ENCODE measurements at regions of chr10 and their contacts with region 1.

Region 1: DNA sequence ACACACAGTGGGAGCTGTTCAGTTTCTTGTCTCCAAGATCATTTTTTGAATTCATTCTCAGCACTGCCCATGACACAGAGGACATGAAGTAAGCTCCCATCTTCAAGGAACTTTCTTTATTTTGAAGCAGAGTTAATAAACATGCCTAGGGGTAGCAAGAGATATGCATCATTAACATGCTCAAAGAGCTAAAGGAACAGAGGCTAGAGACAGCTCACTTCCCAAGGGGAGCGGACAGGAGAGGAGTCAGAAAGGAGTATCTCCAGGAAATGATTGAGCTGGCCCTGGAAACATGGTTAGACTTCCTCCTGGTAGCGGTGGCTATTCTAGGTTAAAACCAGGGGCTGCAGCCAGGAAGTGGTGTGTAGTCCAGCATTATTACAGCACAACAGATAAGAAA is 135.9 kb downstream of the GPAM start:
- DNase-seq: peak; percentile 65
- H3K4me3 ChIP-seq: no peak overlapping the region
- H3K27ac ChIP-seq: no peak overlapping the region
- H3K4me1 ChIP-seq: peaks cover 6% of the 10 kb centered on the region
- H3K27me3 ChIP-seq: no peaks in the 10 kb centered on the region
- CTCF ChIP-seq: no peak

Region 2: GRCh38 chr10:111756217-111757061 is 291.2 kb before region 1 on chr10:
- CTCF ChIA-PET with region 1: no interaction called
- POLR2A ChIA-PET with region 1: no interaction called
- intact Hi-C with region 1: no loop called
- DNase-seq: peak; percentile 73
- H3K4me3 ChIP-seq: no peak overlapping the region
- H3K27ac ChIP-seq: no peak overlapping the region
- H3K4me1 ChIP-seq: no peaks in the 10 kb centered on the region
- H3K27me3 ChIP-seq: peaks cover 5% of the 10 kb centered on the region
- CTCF ChIP-seq: peak; percentile 77

Region 3: GRCh38 chr10:112077990-112078389 is 30.3 kb after region 1 on chr10:
- CTCF ChIA-PET with region 1: no interaction called
- POLR2A ChIA-PET with region 1: no interaction called
- intact Hi-C with region 1: loop called (anchors 1 kb)
- DNase-seq: no peak
- H3K4me3 ChIP-seq: no peak overlapping the region
- H3K27ac ChIP-seq: no peak overlapping the region
- H3K4me1 ChIP-seq: peaks cover 12% of the 10 kb centered on the region
- H3K27me3 ChIP-seq: peaks cover 5% of the 10 kb centered on the region
- CTCF ChIP-seq: no peak

Measured in A673 (cell line).